IMR-90 (cell line): ENCODE measurements at regions of chr9 and their contacts with region 1.

Region 1: DNA sequence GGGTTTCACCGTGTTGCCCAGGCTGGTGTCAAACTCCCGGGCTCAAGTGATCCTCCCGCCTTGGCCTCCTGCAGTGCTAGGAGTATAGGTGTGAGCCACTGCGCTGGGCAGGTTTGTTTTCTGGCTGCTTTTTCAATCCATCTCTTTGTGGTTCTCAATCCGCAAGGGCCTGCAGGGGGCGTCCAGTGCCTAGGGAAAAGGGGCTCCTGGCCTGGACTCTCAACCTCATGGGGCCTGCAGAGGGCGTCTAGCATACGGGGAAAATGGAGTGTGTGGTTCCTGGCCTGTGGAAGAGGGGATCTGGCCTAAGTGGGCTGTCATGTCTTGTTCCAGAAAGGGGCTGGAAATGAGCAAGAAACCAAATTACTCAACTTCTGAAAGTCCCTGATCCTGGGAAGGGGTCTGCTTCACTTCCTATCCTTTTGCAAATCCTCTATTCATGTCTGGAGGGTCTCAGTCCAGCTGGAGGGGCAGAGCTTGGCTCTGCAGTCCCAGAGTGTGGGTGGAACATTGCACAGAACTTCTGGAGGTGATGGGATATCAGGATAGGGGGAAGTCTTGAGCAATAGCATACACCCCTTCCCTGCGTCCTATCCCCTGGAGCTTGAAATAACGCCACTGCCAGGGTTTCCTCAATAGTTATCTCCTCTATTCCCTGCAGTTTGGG is 12.7 kb upstream of the CCL27 start:
- DNase-seq: peak; percentile 59
- ATAC-seq: peak; percentile 96
- H3K4me3 ChIP-seq: no peak overlapping the region
- H3K27ac ChIP-seq: no peak overlapping the region
- H3K4me1 ChIP-seq: no peaks in the 10 kb centered on the region
- H3K27me3 ChIP-seq: no peaks in the 10 kb centered on the region
- CTCF ChIP-seq: peak; percentile 94
- POLR2A ChIP-seq: no peak
- RAD21 ChIP-seq: peak; percentile 70

Region 2: DNA sequence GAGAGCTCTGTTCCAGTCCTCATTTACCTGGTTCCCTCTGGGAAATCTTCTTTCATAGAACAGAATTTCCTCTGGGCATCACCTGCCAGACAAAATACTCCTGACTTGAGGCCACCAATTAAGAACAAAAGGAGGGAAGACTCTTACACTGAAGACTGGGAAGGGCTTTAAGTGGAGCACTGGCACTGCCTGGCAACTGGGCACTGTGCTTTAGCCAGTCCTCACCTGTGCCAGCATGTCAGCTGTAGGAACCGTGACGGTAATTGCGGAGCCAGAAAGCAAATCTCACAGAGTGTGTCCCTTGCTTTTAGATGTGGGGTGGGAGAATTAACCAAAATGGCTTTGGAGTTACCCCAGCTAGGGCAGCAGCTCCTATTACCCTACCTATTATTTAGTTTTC is 257.4 kb before region 1 on chr9:
- CTCF ChIA-PET with region 1: no interaction called
- POLR2A ChIA-PET with region 1: no interaction called
- dilution Hi-C with region 1: no loop called
- in situ Hi-C with region 1: no loop called
- intact Hi-C with region 1: no loop called
- DNase-seq: no peak
- ATAC-seq: no peak
- H3K4me3 ChIP-seq: no peak overlapping the region
- H3K27ac ChIP-seq: no peak overlapping the region
- H3K4me1 ChIP-seq: no peaks in the 10 kb centered on the region
- H3K27me3 ChIP-seq: no peaks in the 10 kb centered on the region
- CTCF ChIP-seq: no peak
- POLR2A ChIP-seq: no peak
- RAD21 ChIP-seq: no peak

Region 3: DNA sequence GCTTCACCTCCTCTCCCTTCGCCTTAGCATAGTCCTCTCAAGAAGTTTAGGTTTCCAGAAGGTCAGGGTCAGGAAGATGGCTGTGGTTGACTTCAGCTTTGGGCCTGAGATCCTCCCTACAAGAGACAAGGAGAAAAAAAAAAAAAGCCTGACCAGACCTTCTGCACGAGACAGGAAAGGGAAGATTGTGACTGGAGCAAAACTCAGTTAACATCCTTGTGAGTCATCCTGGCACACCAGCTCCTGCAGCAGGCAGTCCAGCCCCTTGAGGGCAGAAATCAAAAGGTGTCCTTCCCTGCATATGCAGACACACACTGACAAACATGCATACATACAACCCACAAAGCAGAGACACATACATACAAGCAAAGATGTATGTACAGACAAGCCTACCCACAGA is 134.4 kb before region 1 on chr9:
- CTCF ChIA-PET with region 1: no interaction called
- POLR2A ChIA-PET with region 1: no interaction called
- dilution Hi-C with region 1: no loop called
- in situ Hi-C with region 1: no loop called
- intact Hi-C with region 1: no loop called
- DNase-seq: peak; percentile 64
- ATAC-seq: peak; percentile 68
- H3K4me3 ChIP-seq: no peak overlapping the region
- H3K27ac ChIP-seq: no peak overlapping the region
- H3K4me1 ChIP-seq: no peaks in the 10 kb centered on the region
- H3K27me3 ChIP-seq: peaks cover 21% of the 10 kb centered on the region
- CTCF ChIP-seq: no peak
- POLR2A ChIP-seq: no peak
- RAD21 ChIP-seq: no peak

Region 4: GRCh38 chr9:34693560-34693959 is 18.4 kb after region 1 on chr9:
- CTCF ChIA-PET with region 1: no interaction called
- POLR2A ChIA-PET with region 1: interaction called, 14 read pairs
- dilution Hi-C with region 1: no loop called
- in situ Hi-C with region 1: no loop called
- intact Hi-C with region 1: no loop called
- DNase-seq: no peak
- ATAC-seq: no peak
- H3K4me3 ChIP-seq: no peak overlapping the region
- H3K27ac ChIP-seq: no peak overlapping the region
- H3K4me1 ChIP-seq: no peaks in the 10 kb centered on the region
- H3K27me3 ChIP-seq: no peaks in the 10 kb centered on the region; the same call in 1 of the 2 replicates
- CTCF ChIP-seq: no peak
- POLR2A ChIP-seq: no peak
- RAD21 ChIP-seq: no peak